Spleen (tissue), 13 donors: ENCODE measurements at regions of chr2 and their contacts with region 1.

Region 1: GRCh38 chr2:75676464-75676863 is 29.9 kb downstream of the MRPL19 start:
- DNase-seq: no peak
- H3K4me3 ChIP-seq: no peak overlapping the region
- H3K27ac ChIP-seq: no peak overlapping the region
- H3K4me1 ChIP-seq: peaks cover 0 to 8% (median 2%) of the 10 kb centered on the region in 6 donors
- H3K27me3 ChIP-seq: no peaks in the 10 kb centered on the region
- CTCF ChIP-seq: no peak
- POLR2A ChIP-seq: no peak

Region 2: DNA sequence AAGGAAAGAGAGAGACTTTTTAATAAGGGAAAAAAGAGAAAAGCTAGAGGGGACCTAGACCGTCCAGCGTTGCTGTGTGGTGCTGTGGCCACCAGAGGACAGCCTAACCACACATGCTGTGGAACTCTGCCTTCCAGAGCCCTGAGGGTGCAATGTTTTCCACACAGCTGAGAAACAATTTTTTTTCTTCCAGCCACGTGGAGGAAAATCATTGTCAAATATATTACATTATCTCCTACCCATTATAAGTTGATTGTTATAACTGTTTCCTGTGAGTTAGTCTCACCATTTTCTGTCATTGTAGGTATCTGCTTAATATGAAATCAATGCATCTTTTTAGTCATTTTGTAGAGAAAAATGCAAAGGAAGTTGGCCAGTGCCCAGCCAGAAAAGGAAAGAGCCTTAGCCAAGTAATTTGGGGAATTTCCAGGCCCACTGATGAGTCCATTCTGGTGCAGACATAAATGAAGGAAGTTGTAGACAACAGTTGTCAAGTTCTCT is 35.8 kb before region 1 on chr2:
- intact Hi-C with region 1: loop called (anchors 5 kb)
- DNase-seq: peak; percentile 82
- H3K4me3 ChIP-seq: no peak overlapping the region
- H3K27ac ChIP-seq: peak overlapping the region; percentile 1 to 60 (median 36)
- H3K4me1 ChIP-seq: peaks cover 0 to 20% (median 7%) of the 10 kb centered on the region in 6 donors
- H3K27me3 ChIP-seq: peaks cover 0 to 7% (median 0%) of the 10 kb centered on the region in 7 donors
- CTCF ChIP-seq: peak; percentile 68 to 92 (median 83)
- POLR2A ChIP-seq: no peak

Region 3: DNA sequence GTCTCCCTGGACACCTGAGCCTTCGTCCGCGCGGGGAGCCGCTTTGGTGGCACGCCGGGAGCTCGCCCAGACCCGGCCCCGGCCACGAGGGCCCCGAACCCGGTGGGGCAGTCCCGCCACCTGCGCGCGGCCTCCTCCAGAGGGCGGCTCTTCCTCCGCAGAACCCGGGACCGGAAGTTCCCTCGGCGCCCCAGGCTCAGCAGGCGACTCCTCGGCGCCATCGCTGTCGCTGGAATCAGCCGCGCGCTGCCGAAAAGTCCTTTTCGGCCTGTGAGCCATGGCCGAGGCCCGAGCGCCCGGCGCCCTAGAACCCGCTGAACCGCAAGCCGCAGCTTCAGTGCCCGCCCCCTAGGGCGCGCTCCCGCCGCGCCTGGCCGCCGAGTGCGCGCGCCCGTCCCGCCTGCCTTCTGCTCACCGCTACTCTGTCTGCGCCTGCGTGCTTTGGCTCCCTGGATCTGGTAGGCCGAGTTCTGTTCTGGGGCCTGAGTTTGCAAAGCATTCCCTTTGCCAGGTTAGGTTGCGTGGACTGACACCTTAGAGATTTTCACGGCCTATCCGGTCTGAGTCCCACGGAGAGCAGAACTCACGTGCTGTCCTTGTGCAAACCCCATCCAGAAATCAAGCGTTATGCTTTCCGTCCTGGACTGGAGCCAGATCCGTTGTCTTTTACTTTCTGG is 34.3 kb after region 1 on chr2 and contains the start of gene GCFC2:
- intact Hi-C with region 1: no loop called
- DNase-seq: peak; percentile 95
- H3K4me3 ChIP-seq: peak within 1 kb of the TSS; percentile 50 to 80 (median 64)
- H3K27ac ChIP-seq: peak within 1 kb of the TSS; percentile 90 to 95 (median 94)
- H3K4me1 ChIP-seq: peaks cover 9 to 42% (median 25%) of the 10 kb centered on the region in 6 donors
- H3K27me3 ChIP-seq: no peaks in the 10 kb centered on the region
- CTCF ChIP-seq: peak in 9 of 11 experiments; percentile 24 to 65 (median 51)
- POLR2A ChIP-seq: no peak
- total RNA-seq, gene GCFC2: 13.1 to 26.2 (median 20.8) TPM

Region 4: GRCh38 chr2:75728614-75729419 is 52.4 kb after region 1 on chr2:
- intact Hi-C with region 1: no loop called
- DNase-seq: no peak
- H3K4me3 ChIP-seq: no peak overlapping the region
- H3K27ac ChIP-seq: no peak overlapping the region
- H3K4me1 ChIP-seq: no peaks in the 10 kb centered on the region
- H3K27me3 ChIP-seq: peaks cover 0 to 11% (median 0%) of the 10 kb centered on the region in 7 donors
- CTCF ChIP-seq: no peak
- POLR2A ChIP-seq: no peak